Psoas muscle (tissue), 8 donors: ENCODE measurements at regions of chr10 and their contacts with region 1.

Region 1: DNA sequence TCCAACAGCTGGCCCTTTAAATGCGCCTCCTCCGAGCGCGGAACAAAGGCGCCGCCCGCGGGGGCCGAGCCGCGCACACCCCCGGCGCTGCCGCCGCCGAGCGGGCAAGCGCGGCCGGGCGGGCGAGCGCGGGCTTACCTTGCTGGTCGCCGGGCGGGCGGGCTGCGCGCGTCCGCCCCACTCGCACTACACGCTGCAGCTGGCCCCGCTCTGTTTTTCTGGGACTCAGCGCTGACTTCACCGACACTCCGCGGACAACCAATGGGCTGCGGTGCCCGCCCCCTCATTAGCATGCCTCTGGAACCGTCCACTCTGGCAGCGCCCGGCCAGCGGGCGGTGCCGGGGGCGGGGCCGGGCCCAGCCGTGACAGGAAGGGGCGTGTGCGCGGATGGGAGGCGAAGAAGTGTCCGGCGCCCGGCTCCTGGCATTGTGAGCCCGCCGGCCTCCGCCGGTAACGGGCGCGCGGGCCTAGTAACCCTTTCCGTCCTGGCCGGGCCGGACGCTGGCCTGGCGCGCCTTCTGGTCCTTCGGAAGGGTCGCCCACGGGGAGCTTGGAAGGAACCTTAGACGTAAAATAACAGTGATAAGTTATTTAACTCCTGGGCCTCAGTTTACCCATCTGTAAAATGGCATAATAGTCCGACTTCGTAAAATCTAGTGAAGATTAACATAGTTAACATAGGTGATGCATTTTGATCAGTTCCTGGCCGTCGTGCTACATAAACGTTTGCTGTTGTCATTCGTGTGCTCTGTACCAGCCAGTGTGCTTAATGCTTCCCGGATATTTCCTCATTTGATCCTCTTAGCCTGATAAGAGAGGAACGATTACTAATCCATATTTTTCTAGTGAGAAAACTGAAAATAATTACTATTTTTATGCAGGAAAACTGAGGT is at the start of gene SORBS1:
- DNase-seq: peak; percentile 96 to 98
- ATAC-seq: peak; percentile 97 to 100 (median 98)
- H3K4me3 ChIP-seq: peak within 1 kb of the TSS; percentile 95
- H3K27ac ChIP-seq: peak within 1 kb of the TSS; percentile 89
- H3K4me1 ChIP-seq: peaks cover 19% of the 10 kb centered on the region
- H3K27me3 ChIP-seq: no peaks in the 10 kb centered on the region
- CTCF ChIP-seq: no peak
- total RNA-seq, gene SORBS1: 71.1 to 306 (median 160) TPM

Region 2: DNA sequence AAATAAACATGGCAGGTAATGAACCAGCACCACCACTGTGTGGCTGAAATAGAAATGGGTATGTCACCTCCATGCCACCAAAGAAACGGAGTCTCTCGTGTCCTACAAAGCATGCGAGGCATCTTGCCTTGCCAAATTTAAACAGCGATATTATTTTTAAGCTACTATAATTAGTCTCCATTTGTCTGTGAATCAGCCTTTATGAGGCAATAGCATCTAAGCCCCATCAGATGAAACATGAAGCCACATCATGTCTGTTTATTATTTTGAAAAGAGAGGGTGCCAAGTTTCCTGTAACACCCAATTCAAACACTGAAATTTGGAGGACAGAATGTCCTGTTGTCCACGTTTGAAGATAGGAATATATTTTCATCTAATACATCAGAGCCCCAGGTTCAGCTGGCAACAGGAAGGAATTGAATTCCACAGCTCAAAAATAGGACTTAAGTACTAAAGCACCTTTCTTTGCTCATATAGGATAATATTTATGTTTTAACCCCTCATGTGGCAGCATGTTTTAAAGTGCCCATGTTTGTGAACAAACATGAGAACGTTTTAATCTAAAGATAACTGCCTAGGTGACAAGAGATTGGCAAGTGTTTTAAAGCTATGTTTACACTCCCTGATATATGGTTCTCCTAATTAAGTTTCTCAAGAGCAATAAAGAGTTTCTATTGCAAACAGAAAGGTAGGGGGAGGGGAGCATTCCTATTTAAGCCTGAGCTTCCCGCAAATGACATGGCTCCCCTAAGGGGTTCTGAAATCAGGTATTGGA is 87.0 kb before region 1 on chr10:
- intact Hi-C with region 1: loop called (anchors 5 kb)
- DNase-seq: no peak
- ATAC-seq: peak; percentile 69 to 82 (median 74)
- H3K4me3 ChIP-seq: peak overlapping the region; percentile 12
- H3K27ac ChIP-seq: peak overlapping the region; percentile 96
- H3K4me1 ChIP-seq: peaks cover 91% of the 10 kb centered on the region
- H3K27me3 ChIP-seq: no peaks in the 10 kb centered on the region
- CTCF ChIP-seq: peak; percentile 38

Region 3: DNA sequence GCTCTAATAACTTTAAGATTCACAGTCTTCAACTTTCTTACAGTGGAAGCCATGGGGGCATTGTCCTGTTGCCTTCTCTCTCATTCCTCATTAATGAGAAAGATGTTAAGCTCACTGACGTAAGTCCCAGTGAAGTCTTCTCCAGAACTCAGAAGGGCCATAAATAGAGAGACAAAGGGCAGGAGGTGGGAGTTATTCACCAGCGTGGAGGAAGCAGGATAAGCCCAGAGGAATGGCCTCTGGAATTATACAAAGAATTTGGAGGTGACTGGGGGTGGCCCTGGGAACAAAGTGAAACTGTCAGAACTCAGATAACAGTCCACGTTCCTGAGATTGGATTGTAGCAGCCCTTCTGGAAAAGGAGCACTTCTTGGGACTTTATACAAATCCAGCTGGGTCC is 52.7 kb before region 1 on chr10:
- intact Hi-C with region 1: loop called in 1 of 2 experiments (anchors 10 kb)
- DNase-seq: no peak
- ATAC-seq: peak in 2 of 4 donors; percentile 26 to 41
- H3K4me3 ChIP-seq: no peak overlapping the region
- H3K27ac ChIP-seq: peak overlapping the region; percentile 46
- H3K4me1 ChIP-seq: peaks cover 59% of the 10 kb centered on the region
- H3K27me3 ChIP-seq: no peaks in the 10 kb centered on the region
- CTCF ChIP-seq: no peak

Region 4: GRCh38 chr10:95513941-95514392 is 47.5 kb before region 1 on chr10:
- intact Hi-C with region 1: loop called (anchors 5 to 10 kb)
- DNase-seq: peak; percentile 51 to 76
- ATAC-seq: peak; percentile 90 to 92 (median 91)
- H3K4me3 ChIP-seq: no peak overlapping the region
- H3K27ac ChIP-seq: peak overlapping the region; percentile 66
- H3K4me1 ChIP-seq: peaks cover 67% of the 10 kb centered on the region
- H3K27me3 ChIP-seq: no peaks in the 10 kb centered on the region
- CTCF ChIP-seq: no peak

Region 5: DNA sequence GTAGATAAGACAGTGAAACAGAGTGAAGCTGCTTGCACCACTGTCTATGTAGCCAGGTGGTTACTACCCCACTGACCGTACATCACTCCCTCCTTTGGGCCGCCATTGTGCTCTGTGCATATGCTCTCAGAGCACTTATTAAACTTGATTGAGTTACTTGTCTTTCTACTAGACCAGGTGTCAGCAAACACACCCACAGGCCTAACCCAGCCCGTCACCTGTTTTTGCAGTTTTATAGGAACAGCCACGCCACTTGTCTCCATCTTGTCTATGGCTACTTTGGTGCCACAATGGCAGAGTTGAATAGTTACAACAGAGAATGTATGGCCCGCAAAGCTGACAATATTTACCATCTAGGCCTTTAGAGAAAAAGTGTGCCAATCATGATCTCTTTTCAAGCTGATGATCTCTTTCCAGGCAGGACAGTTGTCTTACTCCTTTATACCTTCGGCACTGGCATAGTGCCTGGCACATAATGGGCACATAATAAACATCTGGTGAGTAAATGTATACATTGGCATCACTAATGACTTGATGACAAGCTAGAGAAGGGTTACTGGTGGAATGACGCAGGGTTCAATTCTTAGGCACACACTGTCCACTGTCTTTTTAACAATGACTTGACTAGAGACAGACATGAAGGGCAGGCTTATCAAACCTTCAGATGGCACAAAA is 36.9 kb before region 1 on chr10:
- intact Hi-C with region 1: loop called (anchors 5 kb)
- DNase-seq: no peak
- ATAC-seq: peak in 2 of 4 donors; percentile 3 to 31
- H3K4me3 ChIP-seq: no peak overlapping the region
- H3K27ac ChIP-seq: peak overlapping the region; percentile 75
- H3K4me1 ChIP-seq: peaks cover 67% of the 10 kb centered on the region
- H3K27me3 ChIP-seq: no peaks in the 10 kb centered on the region
- CTCF ChIP-seq: no peak